ENCODE measurements at regions of chr6 and their contacts with region 1.

Region 1: DNA sequence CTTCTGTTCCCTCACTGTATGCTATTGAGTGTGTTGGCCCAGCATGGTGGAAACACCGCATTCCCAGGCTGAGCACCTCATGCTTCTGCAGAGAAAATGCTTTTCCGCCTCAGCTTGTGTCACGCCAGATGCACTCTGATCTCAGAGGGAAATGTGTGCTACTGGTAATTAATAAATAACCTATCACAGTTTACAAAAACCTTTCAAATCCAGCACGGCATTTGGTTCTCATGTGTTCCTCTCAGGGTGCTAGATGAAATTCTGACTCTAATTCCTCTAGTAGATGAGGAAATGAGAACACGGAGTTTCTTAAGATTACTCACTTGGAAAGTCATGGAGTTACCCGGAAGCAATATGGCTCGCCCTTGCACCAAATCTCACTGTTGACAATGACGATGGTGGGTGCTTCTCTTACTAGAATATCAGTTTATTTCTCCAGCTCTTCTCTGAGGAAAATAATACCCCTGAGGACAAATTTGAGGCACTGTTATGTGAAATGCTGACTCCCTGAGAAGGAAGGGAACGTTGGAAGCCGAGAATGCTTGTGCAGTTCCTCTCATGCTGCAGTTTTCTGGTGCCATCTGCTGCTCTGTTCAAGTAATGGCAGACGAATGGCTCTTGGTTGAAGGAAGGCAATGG is 116.6 kb downstream of the RNF144B start:
- DNase-seq: peak; percentile 66
- H3K4me3 ChIP-seq: no peak overlapping the region
- H3K27ac ChIP-seq: no peak overlapping the region
- H3K27me3 ChIP-seq: no peaks in the 10 kb centered on the region
- CTCF ChIP-seq: peak; percentile 99

Region 2: DNA sequence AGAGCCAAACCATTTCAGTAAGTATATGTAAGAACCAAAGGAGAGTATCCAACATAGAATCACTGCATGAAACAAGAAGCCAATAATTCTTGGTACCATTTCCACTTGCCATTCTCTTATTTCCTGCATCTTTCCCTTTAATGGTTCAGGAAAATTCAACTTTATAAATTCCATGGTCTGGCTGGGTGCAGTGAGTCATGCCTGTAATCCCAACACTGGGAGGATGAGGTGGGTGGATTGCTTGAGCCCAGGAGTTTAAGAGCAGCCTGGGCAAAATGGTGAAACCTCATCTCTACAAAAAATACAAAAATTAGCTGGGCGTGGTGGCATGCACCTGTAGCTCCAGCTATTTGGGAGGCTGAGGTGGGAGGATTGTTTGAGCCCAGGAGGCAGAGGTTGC is 402.4 kb before region 1 on chr6:
- CTCF ChIA-PET with region 1: no interaction called
- POLR2A ChIA-PET with region 1: no interaction called
- DNase-seq: peak; percentile 29
- H3K4me3 ChIP-seq: no peak overlapping the region
- H3K27ac ChIP-seq: no peak overlapping the region
- H3K27me3 ChIP-seq: no peaks in the 10 kb centered on the region
- CTCF ChIP-seq: no peak

Region 3: DNA sequence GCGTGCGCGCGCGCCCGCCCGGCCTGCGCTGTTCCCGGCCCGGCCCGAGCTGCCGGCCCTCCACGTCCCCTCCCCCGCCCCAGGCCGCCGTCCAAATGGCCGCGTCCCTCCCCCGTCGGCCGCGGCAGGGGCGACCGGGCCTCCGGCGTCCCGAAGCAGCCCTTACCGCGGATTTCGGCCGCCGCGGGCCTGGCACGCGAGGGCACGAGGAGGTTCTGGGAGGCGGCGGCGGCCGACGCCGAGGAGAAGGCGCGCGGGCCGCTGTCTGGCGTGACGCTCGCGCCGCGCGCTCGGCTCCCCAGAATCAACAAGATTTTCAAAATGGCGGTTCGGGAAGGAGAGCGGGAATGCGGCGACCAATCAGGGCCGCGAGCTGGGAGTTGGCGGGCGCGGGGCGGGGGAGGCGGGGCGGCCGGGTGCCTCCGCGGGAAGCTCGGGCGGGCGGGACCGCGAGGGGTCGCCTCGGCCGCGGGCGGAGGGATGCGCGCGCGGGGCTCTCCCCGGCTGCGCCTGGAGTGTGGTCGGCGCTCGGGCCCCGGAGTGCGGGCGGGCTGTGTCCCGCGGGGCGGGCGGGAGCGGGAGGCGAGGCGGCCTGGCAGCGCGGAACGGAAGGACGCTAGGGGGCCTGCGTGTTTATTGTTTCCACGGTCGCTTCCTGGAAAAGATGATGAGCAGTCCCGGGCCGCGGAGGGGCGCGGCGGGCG is 239.3 kb before region 1 on chr6 and contains the start of gene DEK:
- CTCF ChIA-PET with region 1: interaction called, 12 read pairs
- POLR2A ChIA-PET with region 1: no interaction called
- DNase-seq: peak; percentile 46
- H3K4me3 ChIP-seq: peak within 1 kb of the TSS; percentile 90
- H3K27ac ChIP-seq: peak within 1 kb of the TSS; percentile 75
- H3K27me3 ChIP-seq: no peaks in the 10 kb centered on the region
- CTCF ChIP-seq: peak; percentile 61
- polyA plus RNA-seq, gene DEK: 39.1 and 68.1 TPM in 2 replicates

Region 4: DNA sequence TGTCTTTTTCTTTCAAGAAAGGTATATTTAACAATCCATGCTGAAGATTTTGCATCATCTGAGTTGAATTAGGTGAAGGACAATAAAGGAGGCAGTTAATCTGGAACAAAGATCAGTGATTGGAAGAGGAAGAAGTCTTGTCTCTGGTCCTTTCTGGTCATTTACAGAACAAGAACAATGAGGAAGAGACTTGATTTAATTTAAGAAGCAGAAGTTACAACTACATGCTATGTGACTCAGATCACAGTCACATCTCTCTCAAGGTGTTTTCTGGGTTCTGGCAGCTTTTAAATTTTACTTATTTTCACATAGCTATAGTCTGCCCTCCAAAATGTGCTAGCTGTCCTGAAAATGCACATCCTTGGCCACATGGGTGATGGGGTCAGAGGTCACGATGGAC is 185.9 kb before region 1 on chr6:
- CTCF ChIA-PET with region 1: interaction called, 364 read pairs
- POLR2A ChIA-PET with region 1: no interaction called
- DNase-seq: no peak
- H3K4me3 ChIP-seq: no peak overlapping the region
- H3K27ac ChIP-seq: no peak overlapping the region
- H3K27me3 ChIP-seq: no peaks in the 10 kb centered on the region
- CTCF ChIP-seq: no peak

Region 5: GRCh38 chr6:18323935-18324705 is 179.6 kb before region 1 on chr6:
- CTCF ChIA-PET with region 1: interaction called, 364 read pairs
- POLR2A ChIA-PET with region 1: no interaction called
- DNase-seq: no peak
- H3K4me3 ChIP-seq: no peak overlapping the region
- H3K27ac ChIP-seq: no peak overlapping the region
- H3K27me3 ChIP-seq: no peaks in the 10 kb centered on the region
- CTCF ChIP-seq: peak; percentile 77

Region 6: GRCh38 chr6:18330548-18331081 is 173.1 kb before region 1 on chr6:
- CTCF ChIA-PET with region 1: interaction called, 364 read pairs
- POLR2A ChIA-PET with region 1: interaction called, 3 read pairs
- DNase-seq: no peak
- H3K4me3 ChIP-seq: no peak overlapping the region
- H3K27ac ChIP-seq: no peak overlapping the region
- H3K27me3 ChIP-seq: no peaks in the 10 kb centered on the region
- CTCF ChIP-seq: no peak

Region 7: DNA sequence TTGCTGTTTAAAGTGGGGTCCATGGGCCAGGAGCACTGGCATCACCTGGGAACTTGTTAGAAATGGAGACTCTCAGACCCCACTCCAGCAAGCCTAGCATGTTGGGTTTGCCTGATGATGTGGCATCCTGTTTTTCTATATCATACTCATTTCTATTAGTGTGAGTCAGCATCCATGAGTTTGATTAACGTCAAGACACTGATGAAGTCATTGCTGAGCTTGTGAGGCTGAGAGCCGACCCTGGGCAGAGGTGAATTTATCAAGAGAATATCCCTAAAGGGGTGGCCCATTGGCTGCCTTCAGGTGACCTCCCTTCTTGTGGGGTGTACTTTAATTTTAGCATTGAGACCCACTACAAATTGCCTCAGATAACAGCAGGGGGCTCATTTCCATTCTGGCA is 160.0 kb before region 1 on chr6:
- CTCF ChIA-PET with region 1: interaction called, 12 read pairs
- POLR2A ChIA-PET with region 1: interaction called, 5 read pairs
- DNase-seq: peak; percentile 55
- H3K4me3 ChIP-seq: no peak overlapping the region
- H3K27ac ChIP-seq: peak overlapping the region; percentile 66
- H3K27me3 ChIP-seq: no peaks in the 10 kb centered on the region
- CTCF ChIP-seq: no peak

Region 8: GRCh38 chr6:18488526-18489270 is 15.0 kb before region 1 on chr6:
- CTCF ChIA-PET with region 1: interaction called, 11 read pairs
- POLR2A ChIA-PET with region 1: no interaction called
- DNase-seq: no peak
- H3K4me3 ChIP-seq: no peak overlapping the region
- H3K27ac ChIP-seq: no peak overlapping the region
- H3K27me3 ChIP-seq: peaks cover 5% of the 10 kb centered on the region
- CTCF ChIP-seq: no peak